H1 (cell line): ENCODE measurements at regions of chr13 and their contacts with region 1.

Region 1: GRCh38 chr13:51452361-51453206 is at the start of gene INTS6:
- DNase-seq: peak; percentile 98 to 99
- H3K4me3 ChIP-seq: peak within 1 kb of the TSS; percentile 84 to 99 (median 92)
- H3K27ac ChIP-seq: peak within 1 kb of the TSS; percentile 83
- H3K4me1 ChIP-seq: no peaks in the 10 kb centered on the region; a peak in 1 of 7 replicates
- H3K27me3 ChIP-seq: no peaks in the 10 kb centered on the region
- CTCF ChIP-seq: no peak
- EP300 ChIP-seq: no peak
- POLR2A ChIP-seq: peak; percentile 100
- RAD21 ChIP-seq: peak; percentile 1 to 14; a peak in 1 of 4 replicates
- total RNA-seq, gene INTS6: 42.6 and 42.8 TPM in 2 replicates

Region 2: GRCh38 chr13:51370116-51370515 is 82.5 kb before region 1 on chr13:
- CTCF ChIA-PET with region 1: no interaction called
- POLR2A ChIA-PET with region 1: no interaction called
- DNase-seq: no peak
- H3K4me3 ChIP-seq: no peak overlapping the region
- H3K27ac ChIP-seq: no peak overlapping the region
- H3K4me1 ChIP-seq: peaks cover 0 to 7% (median 3%) of the 10 kb centered on the region in 4 experiments; a peak in 3 of 7 replicates
- H3K27me3 ChIP-seq: no peaks in the 10 kb centered on the region
- CTCF ChIP-seq: no peak
- EP300 ChIP-seq: no peak
- POLR2A ChIP-seq: no peak
- RAD21 ChIP-seq: no peak

Region 3: DNA sequence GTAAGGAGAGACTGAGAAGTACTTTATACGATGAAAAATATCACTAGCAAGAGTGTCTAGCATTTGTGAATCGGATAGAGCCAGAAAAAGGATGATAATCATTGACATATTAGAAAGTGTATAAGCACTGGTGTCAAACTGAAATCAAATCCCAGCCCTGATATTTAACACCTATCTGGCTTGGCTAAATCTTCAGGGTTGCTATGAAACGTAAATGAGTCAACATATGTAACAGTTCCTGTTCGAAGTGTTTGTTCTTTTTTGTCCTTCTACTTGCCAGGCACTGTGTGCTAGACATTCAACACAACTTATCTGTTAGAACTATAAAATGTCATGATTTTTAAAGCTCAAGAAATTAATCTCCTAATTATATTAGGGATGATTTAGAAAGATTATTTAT is 72.3 kb before region 1 on chr13:
- CTCF ChIA-PET with region 1: no interaction called
- POLR2A ChIA-PET with region 1: no interaction called
- DNase-seq: no peak
- H3K4me3 ChIP-seq: no peak overlapping the region
- H3K27ac ChIP-seq: no peak overlapping the region
- H3K4me1 ChIP-seq: no peaks in the 10 kb centered on the region
- H3K27me3 ChIP-seq: no peaks in the 10 kb centered on the region
- CTCF ChIP-seq: no peak
- EP300 ChIP-seq: no peak
- POLR2A ChIP-seq: no peak
- RAD21 ChIP-seq: no peak

Region 4: DNA sequence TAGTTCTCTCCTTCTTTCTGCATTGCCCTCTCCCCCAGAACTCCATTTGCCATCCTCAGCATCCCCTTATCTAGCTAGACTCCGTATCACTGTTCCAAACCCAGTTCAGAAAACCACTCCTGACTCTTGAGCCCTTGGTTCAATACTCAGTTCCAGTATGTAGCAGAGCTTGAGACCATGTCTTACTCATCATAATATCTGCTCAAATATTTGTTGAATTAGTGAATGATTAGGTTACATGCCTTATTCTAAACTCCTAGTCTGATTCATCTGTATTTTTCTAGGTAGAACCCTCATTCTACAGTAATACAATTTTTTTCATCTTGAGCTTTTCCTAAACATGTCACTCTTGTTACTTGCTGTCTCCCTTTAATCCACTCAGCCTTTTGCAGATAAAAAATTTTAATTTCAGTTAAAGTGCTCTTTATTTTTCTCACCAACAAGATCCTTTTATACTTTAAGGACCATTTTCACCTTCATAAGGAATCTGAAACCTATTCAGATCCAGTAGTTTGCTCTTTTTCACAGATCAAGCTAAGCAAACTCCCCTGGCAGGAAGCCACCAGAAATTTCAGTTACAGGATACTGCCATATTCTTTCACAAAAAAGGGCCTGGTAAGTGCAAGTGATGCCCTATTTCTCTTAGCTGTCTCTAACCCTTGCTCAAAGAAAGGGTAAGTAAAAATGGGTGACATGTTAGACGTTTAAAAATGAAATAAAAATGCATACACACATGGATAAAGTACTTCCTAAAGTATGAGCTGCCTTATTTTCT is 23.3 kb after region 1 on chr13:
- CTCF ChIA-PET with region 1: interaction called, 4 read pairs
- POLR2A ChIA-PET with region 1: interaction called, 11 read pairs
- DNase-seq: no peak
- H3K4me3 ChIP-seq: no peak overlapping the region
- H3K27ac ChIP-seq: no peak overlapping the region
- H3K4me1 ChIP-seq: no peaks in the 10 kb centered on the region
- H3K27me3 ChIP-seq: no peaks in the 10 kb centered on the region
- CTCF ChIP-seq: no peak
- EP300 ChIP-seq: no peak
- POLR2A ChIP-seq: no peak
- RAD21 ChIP-seq: no peak

Region 5: GRCh38 chr13:51601601-51602565 is 149.3 kb after region 1 on chr13:
- CTCF ChIA-PET with region 1: no interaction called
- POLR2A ChIA-PET with region 1: interaction called, 10 read pairs
- DNase-seq: no peak
- H3K4me3 ChIP-seq: no peak overlapping the region
- H3K27ac ChIP-seq: no peak overlapping the region
- H3K4me1 ChIP-seq: peaks cover 0 to 5% (median 1%) of the 10 kb centered on the region in 4 experiments; a peak in 3 of 7 replicates
- H3K27me3 ChIP-seq: no peaks in the 10 kb centered on the region
- CTCF ChIP-seq: no peak
- EP300 ChIP-seq: no peak
- POLR2A ChIP-seq: no peak
- RAD21 ChIP-seq: no peak

Region 6: GRCh38 chr13:51767100-51767499 is 314.5 kb after region 1 on chr13:
- CTCF ChIA-PET with region 1: no interaction called
- POLR2A ChIA-PET with region 1: interaction called, 11 read pairs
- DNase-seq: no peak
- H3K4me3 ChIP-seq: no peak overlapping the region
- H3K27ac ChIP-seq: no peak overlapping the region
- H3K4me1 ChIP-seq: peaks cover 7 to 12% (median 9%) of the 10 kb centered on the region in 4 experiments
- H3K27me3 ChIP-seq: no peaks in the 10 kb centered on the region
- CTCF ChIP-seq: peak in 2 of 3 experiments; percentile 66 to 84; a peak in 3 of 4 replicates
- EP300 ChIP-seq: no peak
- POLR2A ChIP-seq: no peak
- RAD21 ChIP-seq: peak; percentile 75 to 77

Region 7: GRCh38 chr13:51797664-51798488 is 345.3 kb after region 1 on chr13:
- CTCF ChIA-PET with region 1: interaction called, 5 read pairs
- POLR2A ChIA-PET with region 1: interaction called, 23 read pairs
- DNase-seq: peak in 1 of 2 experiments; percentile 55
- H3K4me3 ChIP-seq: no peak overlapping the region
- H3K27ac ChIP-seq: no peak overlapping the region
- H3K4me1 ChIP-seq: peaks cover 4 to 18% (median 6%) of the 10 kb centered on the region in 4 experiments
- H3K27me3 ChIP-seq: no peaks in the 10 kb centered on the region
- CTCF ChIP-seq: peak; percentile 36 to 84 (median 63)
- EP300 ChIP-seq: no peak
- POLR2A ChIP-seq: no peak
- RAD21 ChIP-seq: peak; percentile 90 to 92